Sigmoid colon (tissue), 7 donors: ENCODE measurements at regions of chr3 and their contacts with region 1.

Region 1: GRCh38 chr3:133426721-133427120 is 26.9 kb downstream of the BFSP2 start:
- DNase-seq: no peak
- H3K4me3 ChIP-seq: no peak overlapping the region
- H3K27ac ChIP-seq: no peak overlapping the region
- H3K4me1 ChIP-seq: peaks cover 0 to 7% (median 3%) of the 10 kb centered on the region in 4 donors
- H3K27me3 ChIP-seq: peaks cover 0 to 9% (median 0%) of the 10 kb centered on the region in 3 donors
- CTCF ChIP-seq: no peak
- EP300 ChIP-seq: no peak
- POLR2A ChIP-seq: no peak

Region 2: GRCh38 chr3:132730891-132731580 is 695.7 kb before region 1 on chr3:
- intact Hi-C with region 1: loop called (anchors 1 kb)
- DNase-seq: no peak
- H3K4me3 ChIP-seq: no peak overlapping the region
- H3K27ac ChIP-seq: no peak overlapping the region
- H3K4me1 ChIP-seq: no peaks in the 10 kb centered on the region
- H3K27me3 ChIP-seq: no peaks in the 10 kb centered on the region
- CTCF ChIP-seq: peak in 1 of 4 experiments; percentile 21
- EP300 ChIP-seq: no peak
- POLR2A ChIP-seq: no peak

Region 3: DNA sequence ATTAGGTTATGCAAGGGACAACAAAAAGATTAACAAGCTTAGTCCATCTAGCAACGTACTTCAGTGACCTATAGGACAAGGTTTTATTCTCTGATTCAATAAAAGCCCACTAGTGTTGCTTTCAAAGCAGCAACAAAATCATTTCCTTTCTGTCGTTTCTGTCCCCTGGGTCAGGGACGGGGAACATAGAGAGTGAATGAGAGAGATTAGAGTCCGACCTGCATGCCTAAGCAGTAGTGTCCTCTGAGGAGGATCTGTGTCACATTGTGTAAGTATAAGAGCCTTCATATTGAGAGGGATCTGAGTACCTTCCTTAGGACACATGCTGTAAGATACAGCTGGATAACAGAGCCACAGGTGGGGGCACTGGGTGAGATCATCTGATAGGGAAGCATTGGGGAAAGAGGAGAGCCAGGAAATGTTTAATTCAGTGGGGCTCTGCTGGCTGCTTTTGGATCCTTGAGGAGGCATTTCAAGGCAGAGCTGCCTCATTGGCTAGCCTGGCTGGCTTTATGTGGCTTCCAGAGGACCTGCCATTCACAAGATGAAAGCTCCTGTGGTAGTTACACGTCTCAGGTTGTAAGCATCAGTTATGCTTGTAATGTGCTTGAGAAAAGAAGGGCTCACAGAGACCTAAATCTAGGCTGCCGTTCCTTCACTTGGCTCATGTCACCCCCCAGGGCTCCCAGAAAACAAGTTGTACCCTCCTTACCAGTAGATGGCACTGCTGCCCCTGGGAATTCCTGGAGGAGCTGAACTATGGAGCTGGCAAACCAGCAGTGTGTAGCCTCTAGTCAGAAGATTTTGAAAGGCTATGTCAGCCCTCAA is 385.8 kb before region 1 on chr3:
- intact Hi-C with region 1: loop called (anchors 1 kb)
- DNase-seq: peak; percentile 75
- H3K4me3 ChIP-seq: no peak overlapping the region
- H3K27ac ChIP-seq: peak overlapping the region in 1 of 4 donors; percentile 66
- H3K4me1 ChIP-seq: peaks cover 0 to 22% (median 20%) of the 10 kb centered on the region in 4 donors
- H3K27me3 ChIP-seq: peaks cover 0 to 29% (median 12%) of the 10 kb centered on the region in 3 donors
- CTCF ChIP-seq: peak; percentile 32 to 60 (median 48)
- EP300 ChIP-seq: no peak
- POLR2A ChIP-seq: no peak

Region 4: DNA sequence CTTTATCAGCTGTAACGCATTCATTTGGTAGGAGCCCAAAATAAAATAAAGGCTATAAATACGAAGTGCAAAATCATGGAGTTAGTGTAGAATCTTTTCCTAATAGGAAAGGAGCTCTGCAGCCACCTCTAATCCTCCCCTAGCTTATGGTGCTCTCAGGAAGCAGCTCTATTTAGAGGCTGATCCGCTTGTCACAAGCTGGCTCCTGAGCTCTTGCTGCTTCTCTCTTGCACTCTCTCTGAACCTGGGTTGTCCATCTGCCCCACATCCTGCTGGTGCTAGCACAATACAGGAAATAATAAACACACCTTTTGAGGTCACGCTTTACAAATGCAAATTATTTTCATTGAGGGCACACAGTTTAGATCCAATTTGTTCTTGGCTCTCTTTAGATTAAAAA is 64.2 kb before region 1 on chr3:
- intact Hi-C with region 1: no loop called
- DNase-seq: no peak
- H3K4me3 ChIP-seq: no peak overlapping the region
- H3K27ac ChIP-seq: no peak overlapping the region
- H3K4me1 ChIP-seq: no peaks in the 10 kb centered on the region
- H3K27me3 ChIP-seq: no peaks in the 10 kb centered on the region
- CTCF ChIP-seq: no peak
- EP300 ChIP-seq: no peak
- POLR2A ChIP-seq: no peak

Region 5: GRCh38 chr3:133734305-133734704 is 307.6 kb after region 1 on chr3:
- intact Hi-C with region 1: no loop called
- DNase-seq: no peak
- H3K4me3 ChIP-seq: no peak overlapping the region
- H3K27ac ChIP-seq: no peak overlapping the region
- H3K4me1 ChIP-seq: no peaks in the 10 kb centered on the region
- H3K27me3 ChIP-seq: no peaks in the 10 kb centered on the region
- CTCF ChIP-seq: no peak
- EP300 ChIP-seq: no peak
- POLR2A ChIP-seq: no peak

Region 6: DNA sequence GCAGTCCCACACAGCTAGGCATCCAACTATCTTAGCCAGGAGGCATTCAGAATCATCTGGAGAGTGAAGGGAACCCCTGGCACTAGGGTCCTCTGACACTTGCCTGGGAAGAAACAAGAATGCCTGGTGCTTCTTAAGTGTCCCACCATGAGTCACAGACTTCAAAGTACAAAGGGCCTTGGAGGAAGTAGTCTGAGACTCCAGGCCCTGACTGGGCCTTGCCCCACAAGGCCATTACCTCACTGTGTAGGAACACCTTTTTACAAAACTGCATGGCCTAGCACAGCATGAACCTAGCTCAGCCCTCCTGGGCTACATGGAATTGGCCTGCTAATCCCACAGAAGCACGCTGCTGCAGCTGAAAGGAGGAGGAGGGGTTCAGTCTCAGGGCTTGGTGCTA is 707.5 kb after region 1 on chr3:
- intact Hi-C with region 1: no loop called
- DNase-seq: no peak
- H3K4me3 ChIP-seq: no peak overlapping the region
- H3K27ac ChIP-seq: no peak overlapping the region
- H3K4me1 ChIP-seq: no peaks in the 10 kb centered on the region
- H3K27me3 ChIP-seq: no peaks in the 10 kb centered on the region
- CTCF ChIP-seq: no peak
- EP300 ChIP-seq: no peak
- POLR2A ChIP-seq: no peak